Activated T-helper 1 cell treated with anti-CD3 and anti-CD28 coated beads, Interleukin-12 subunit alpha, Interleukin-12 subunit beta, Interleukin-2, Interleukin-4 antibody, amounts not matched to agents 30 ng/mL and 10 ng/mL and 1 ng/mL, durations not matched to agents 14 hours and 24 hours and 36 hours (primary cell): ENCODE measurements at regions of chr21 and their contacts with region 1.

Region 1: DNA sequence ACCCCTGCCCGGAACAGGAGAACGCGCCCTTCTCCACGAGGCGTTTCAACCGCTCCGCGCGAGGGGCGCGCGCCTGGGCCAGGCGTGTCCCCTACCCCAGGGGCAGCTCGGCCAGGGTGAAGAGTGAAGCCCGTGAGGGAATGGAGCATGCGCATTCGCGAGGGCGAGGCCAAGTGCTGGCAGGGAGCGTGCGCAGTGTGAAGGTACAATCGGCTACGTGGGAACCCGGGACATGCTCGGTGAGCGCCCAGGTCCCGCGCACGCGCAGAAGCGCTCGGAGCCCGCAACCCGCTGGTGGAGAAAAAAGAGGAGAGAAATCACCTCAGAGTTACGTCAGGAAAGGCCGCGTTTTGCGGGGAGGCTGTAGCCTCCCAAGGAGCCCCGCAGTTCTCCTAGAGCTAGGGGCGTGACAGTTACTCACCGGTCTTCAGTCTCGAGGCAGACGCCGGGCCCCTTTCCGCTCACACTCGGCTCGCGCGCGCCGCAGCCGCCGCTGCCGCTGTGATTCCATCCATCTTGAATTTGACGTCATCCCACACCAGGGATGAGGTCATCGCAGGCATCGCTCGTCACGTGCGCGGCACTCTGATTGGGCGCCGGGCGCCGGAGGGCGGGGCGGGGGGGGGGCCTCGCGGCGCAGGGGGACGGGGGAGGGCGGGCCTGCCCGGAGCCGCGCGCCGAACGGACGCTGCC is at the start of gene ZBTB21:
- DNase-seq: peak; percentile 98
- H3K4me3 Mint-ChIP-seq: peak within 1 kb of the TSS; percentile 90
- H3K27ac Mint-ChIP-seq: peak within 1 kb of the TSS; percentile 99
- H3K4me1 Mint-ChIP-seq: peaks cover 33% of the 10 kb centered on the region
- H3K27me3 Mint-ChIP-seq: peaks cover 23% of the 10 kb centered on the region
- total RNA-seq, gene ZBTB21: 31.8 and 33.8 TPM in 2 replicates

Region 2: DNA sequence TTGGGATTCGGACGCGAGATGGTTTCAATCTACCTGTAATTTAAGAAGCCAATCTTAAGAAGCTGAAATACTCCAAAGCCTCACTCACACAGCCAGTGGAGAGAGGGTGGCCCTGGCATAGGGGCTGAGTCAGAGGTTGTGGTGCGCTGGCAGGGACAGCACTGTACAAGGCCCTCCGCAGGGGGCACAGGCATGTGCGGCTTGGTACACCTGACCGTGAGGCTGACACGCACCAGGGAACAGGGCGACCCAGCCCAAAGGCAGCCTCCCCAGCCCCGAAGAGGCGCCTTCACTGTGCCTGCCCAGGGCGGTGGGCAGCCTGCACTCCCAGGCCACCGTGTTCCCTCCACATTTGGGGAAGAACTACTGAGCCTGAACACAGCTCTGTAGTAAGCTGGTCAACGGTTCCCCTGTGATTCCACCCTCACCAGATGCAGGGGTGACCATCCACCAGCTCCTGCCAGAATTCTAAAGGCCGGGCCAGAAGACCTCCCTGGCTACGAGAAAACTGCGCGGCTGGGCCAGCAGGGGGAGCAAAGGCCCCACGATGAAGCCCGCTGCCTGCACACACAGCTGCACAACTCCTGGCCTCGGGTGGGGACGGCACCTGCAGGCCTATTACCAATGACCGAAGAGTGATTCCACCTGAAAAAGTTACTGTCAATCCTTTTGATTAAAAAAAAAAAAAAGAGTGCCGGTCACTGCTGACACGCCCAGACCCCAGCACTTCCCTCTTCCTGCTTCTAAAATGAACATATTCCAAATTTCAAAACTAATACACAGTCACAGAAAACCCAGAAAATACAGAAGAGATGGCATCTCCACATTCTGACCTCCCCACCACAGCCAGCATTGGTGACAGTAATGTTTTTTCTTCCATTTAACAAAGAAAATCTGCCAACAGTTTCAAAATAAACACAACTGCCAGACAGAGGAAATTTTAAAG is 193.5 kb before region 1 on chr21:
- intact Hi-C with region 1: loop called (anchors 10 kb)
- DNase-seq: peak; percentile 22
- H3K4me3 Mint-ChIP-seq: no peak overlapping the region
- H3K27ac Mint-ChIP-seq: no peak overlapping the region
- H3K4me1 Mint-ChIP-seq: no peaks in the 10 kb centered on the region
- H3K27me3 Mint-ChIP-seq: no peaks in the 10 kb centered on the region

Region 3: GRCh38 chr21:41899426-41900202 is 110.4 kb before region 1 on chr21:
- intact Hi-C with region 1: loop called (anchors 2 kb)
- DNase-seq: no peak
- H3K4me3 Mint-ChIP-seq: peak overlapping the region; percentile 51
- H3K27ac Mint-ChIP-seq: peak overlapping the region; percentile 83
- H3K4me1 Mint-ChIP-seq: peaks cover 34% of the 10 kb centered on the region
- H3K27me3 Mint-ChIP-seq: no peaks in the 10 kb centered on the region

Region 4: DNA sequence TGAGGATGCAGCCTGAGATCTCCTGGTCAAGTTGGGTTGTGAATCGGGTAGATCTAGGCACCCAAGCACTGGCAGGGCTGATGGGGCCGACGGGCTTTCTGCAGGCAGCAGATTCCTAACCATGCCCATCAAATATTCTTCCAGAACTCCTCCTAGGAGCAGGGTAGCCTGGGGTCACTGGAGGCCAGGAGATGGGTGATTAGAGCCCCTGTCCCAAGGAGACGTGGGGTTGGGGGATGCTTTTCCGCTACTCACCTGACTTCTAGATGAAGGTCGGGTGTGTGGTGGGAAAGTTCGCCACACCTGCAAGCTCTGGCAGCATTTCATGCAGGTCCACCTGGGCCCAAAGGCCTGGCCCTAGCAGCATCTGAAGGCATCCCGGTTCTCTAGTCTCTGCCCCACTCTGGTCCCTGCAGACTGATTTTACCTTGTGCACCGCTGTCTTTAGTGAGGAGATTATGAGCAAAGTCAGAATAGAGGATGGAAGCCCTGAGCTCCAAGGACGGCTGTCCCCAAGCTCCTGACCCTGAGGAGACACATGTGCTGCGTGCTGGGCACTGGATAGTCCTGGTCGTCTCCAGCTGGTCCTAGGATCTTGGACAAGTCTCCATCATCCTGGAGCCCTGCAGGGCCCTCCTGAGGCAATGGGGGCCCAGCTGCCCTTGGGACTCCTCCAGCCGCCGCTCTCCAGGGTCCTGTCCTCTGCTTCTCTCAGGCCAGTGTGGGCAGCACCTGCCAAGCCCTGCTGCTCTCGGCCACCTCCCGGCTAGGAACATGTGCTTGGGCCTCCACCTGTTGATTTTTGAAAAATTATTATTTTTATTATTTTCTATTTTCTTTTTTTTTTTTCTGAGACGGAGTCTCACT is 34.3 kb before region 1 on chr21:
- intact Hi-C with region 1: no loop called
- DNase-seq: no peak
- H3K4me3 Mint-ChIP-seq: no peak overlapping the region
- H3K27ac Mint-ChIP-seq: no peak overlapping the region
- H3K4me1 Mint-ChIP-seq: peaks cover 9% of the 10 kb centered on the region
- H3K27me3 Mint-ChIP-seq: no peaks in the 10 kb centered on the region

Region 5: GRCh38 chr21:42062236-42063022 is 52.5 kb after region 1 on chr21:
- intact Hi-C with region 1: loop called (anchors 1 kb)
- DNase-seq: peak; percentile 70
- H3K4me3 Mint-ChIP-seq: peak overlapping the region; percentile 64
- H3K27ac Mint-ChIP-seq: peak overlapping the region; percentile 73
- H3K4me1 Mint-ChIP-seq: peaks cover 40% of the 10 kb centered on the region
- H3K27me3 Mint-ChIP-seq: peaks cover 8% of the 10 kb centered on the region

Region 6: DNA sequence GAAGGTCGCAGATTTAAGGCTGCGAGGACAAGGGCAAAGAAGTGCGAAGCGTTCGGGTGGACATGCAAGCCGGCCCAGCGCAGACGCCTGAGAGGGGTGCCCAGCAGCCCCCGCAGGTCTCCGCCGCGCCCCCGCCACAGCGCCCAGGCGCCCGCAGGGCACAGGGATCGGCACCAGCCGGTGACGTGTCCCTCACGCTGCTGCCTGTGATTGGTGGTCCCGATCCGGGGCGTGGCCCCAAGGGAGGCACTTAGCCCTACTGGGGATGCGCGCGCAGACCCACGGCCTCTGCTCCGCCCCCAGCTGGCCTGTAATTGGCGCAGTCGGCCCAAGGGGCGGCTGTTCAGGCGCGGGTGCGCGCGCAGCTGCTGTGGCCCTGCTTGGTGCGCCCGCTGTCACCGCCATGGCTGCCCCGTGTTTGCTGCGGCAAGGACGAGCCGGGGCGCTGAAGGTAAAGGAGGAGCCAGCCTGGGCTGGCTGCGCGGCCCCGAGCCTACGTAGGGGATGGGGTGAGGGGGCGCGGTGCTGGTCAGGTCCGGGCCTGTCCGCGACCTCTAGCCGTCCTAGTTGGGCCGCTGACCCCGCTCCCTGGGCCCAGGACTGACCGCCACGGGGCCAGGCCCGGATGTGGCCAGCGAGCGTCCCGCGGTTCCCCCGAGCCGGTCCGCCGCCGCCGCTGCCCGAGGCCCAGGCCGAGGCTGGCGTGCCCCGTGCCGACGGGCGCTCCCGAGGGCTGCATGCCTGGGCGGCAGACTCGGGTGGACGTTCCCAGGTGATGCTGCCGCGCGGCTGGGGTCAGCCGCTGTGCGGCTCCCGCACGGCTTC is 883.2 kb after region 1 on chr21 and contains the start of gene NDUFV3:
- intact Hi-C with region 1: loop called (anchors 10 kb)
- DNase-seq: peak; percentile 99
- H3K4me3 Mint-ChIP-seq: peak within 1 kb of the TSS; percentile 89
- H3K27ac Mint-ChIP-seq: peak within 1 kb of the TSS; percentile 91
- H3K4me1 Mint-ChIP-seq: peaks cover 12% of the 10 kb centered on the region
- H3K27me3 Mint-ChIP-seq: no peaks in the 10 kb centered on the region
- total RNA-seq, gene NDUFV3: 41.9 and 44.4 TPM in 2 replicates